ENCODE measurements at regions of chr9 and their contacts with region 1.

Region 1: DNA sequence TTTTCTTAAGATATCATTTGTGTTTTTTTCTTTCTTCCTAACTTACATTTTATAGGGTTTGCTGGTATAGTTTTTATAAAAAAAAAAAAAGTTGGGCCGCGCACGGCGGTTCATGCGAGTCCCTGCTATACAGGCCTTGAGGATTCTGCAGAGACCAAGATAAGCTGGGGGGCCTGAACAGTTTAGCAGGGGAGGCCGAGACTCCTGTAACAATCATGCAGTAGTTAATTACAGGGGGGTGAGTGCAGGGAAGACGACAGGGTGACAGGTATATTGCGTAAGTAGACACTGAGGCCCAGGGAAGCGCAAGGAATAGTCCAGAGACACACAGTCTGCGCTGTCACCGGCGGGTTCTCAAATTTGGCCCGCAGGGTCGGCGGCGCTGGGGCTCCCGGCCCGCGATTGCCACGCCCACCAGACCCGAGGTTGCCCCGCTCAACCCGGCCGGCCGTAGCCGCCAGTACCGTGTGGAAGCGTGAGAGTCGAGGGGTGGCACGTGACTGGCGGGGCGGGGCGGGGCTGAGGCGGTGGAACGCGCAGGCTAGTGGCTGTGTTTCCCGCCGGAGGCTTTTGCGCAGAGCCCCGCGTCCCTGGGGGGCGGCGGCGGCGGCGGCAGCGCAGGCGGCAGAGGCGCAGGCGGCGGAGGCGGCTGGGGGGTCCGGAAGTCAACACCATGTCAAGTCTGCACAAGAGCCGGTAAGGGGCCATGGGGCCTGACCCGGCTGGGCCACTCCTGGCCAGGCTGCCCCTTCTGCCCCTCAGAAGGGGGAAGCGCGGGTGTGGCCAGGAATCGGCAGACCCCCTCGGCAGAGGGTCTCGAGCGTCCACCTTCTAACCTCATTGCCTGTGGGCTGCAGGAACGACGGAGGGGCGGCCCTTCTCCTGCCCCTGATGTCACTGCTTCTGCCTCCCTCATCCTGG is at the start of gene TBC1D13:
- DNase-seq: peak; percentile 85
- H3K4me3 ChIP-seq: peak within 1 kb of the TSS; percentile 95 to 96
- H3K27ac ChIP-seq: peak within 1 kb of the TSS; percentile 89 to 92
- H3K4me1 ChIP-seq: peaks cover 7% of the 10 kb centered on the region
- H3K27me3 ChIP-seq: no peaks in the 10 kb centered on the region
- CTCF ChIP-seq: peak in 2 of 4 experiments; percentile 9 to 16
- POLR2A ChIP-seq: peak; percentile 39
- total RNA-seq, gene TBC1D13: 23.5 to 29.4 TPM

Region 2: DNA sequence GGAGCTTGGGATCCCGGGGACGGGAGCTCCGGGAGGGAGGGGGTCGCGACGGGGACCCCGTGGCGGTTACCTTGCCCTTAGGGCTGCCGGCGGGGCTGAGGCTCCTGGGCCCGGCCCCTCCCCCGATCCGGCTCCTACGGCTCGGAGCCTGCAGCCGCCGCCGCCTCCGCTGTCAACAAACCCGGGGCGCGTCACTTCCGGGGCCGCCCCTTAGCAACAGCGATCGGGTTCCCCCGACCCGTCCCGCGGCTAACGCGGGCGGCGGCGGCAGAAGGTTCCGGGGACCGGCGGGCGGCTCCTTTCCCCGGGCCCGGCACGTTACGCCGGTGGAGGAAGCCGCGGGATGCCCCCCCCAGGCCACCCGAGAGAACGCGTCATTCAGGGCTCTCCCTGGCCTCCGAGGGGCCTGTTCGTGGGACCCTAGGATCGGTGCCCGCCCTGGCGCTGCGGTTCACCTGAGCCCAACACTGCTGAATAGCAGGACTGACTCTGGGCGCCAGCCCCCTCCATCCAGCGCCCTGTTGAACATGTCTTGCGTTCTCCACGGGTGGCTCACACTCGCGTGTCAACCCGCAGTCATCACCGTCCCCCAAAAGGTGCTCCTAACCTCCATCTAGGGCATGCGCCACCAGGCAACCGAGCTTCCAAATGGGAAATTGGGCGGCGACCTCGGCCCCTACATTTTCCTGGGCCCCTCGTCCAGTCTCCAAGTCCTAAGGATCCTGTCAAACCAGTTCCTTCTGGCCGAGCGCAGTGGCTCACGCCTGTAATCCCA is 15.0 kb before region 1 on chr9 and contains the start of gene ZER1:
- intact Hi-C with region 1: loop called (anchors 2 kb)
- DNase-seq: peak; percentile 93
- H3K4me3 ChIP-seq: peak within 1 kb of the TSS; percentile 93 to 100
- H3K27ac ChIP-seq: peak within 1 kb of the TSS; percentile 94 to 97
- H3K4me1 ChIP-seq: peaks cover 5% of the 10 kb centered on the region
- H3K27me3 ChIP-seq: no peaks in the 10 kb centered on the region
- CTCF ChIP-seq: peak in 1 of 4 experiments; percentile 16
- POLR2A ChIP-seq: peak; percentile 81
- total RNA-seq, gene ZER1: 86.6 to 122 TPM

Measured in prostate gland (tissue), 2 donors.